ENCODE measurements at regions of chr15 and their contacts with region 1.

Region 1: GRCh38 chr15:40793216-40793989 is 13.5 kb upstream of the ZFYVE19 start:
- DNase-seq: peak; percentile 72
- H3K4me3 ChIP-seq: no peak overlapping the region
- CTCF ChIP-seq: no peak

Region 2: DNA sequence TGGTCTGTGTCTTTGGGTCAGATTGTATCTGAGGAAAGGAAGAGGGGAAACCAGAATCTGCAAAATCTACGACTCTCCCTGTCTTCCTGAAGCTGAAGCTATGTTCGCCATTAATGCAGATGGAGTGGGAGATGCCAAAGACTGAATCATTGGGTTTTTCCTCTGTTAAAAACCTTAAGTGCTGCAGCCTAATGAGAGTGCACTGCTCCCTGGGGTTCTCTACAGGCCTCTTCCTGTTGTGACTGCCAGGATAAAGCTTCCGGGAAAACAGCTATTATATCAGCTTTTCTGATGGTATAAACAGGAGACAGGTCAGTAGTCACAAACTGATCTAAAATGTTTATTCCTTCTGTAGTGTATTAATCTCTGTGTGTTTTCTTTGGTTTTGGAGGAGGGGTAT is 62.4 kb before region 1 on chr15:
- CTCF ChIA-PET with region 1: no interaction called
- POLR2A ChIA-PET with region 1: no interaction called
- DNase-seq: no peak
- H3K4me3 ChIP-seq: no peak overlapping the region
- CTCF ChIP-seq: no peak

Region 3: GRCh38 chr15:40754883-40755811 is 38.3 kb before region 1 on chr15 and contains the start of gene RMDN3:
- CTCF ChIA-PET with region 1: no interaction called
- POLR2A ChIA-PET with region 1: no interaction called
- DNase-seq: no peak
- H3K4me3 ChIP-seq: peak within 1 kb of the TSS; percentile 92
- CTCF ChIP-seq: no peak

Region 4: DNA sequence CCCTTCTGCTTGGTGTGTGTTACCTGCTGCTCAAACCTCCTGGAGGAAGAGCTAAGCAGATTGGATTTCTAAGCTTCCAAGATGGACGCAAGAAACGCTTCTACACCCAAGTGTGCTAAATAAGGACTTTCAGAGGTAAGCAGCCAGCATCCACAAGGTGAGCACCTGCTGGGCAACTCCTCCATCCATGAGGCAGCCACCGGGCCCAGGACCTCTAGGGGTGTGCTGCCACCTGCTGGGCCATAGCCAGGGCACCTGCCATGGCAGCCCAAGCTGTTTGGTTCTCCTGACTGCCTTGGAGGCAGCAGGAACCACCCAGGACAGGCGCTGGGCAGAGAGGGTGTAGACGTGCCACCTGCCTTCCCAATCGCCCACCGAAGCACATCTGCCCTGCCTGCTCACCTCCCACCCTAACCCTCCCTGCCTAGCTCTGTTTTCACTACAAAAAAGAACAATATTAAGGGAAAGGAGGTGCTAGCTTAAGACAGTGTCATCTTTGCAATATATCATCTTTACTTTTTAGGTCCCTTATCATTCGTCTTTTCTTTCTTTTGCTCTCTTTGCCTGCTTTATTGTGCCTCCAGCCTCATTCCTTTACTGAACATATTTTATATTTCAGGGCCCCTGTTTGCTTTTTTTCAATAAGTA is 10.7 kb before region 1 on chr15:
- CTCF ChIA-PET with region 1: interaction called, 11 read pairs
- POLR2A ChIA-PET with region 1: no interaction called
- DNase-seq: no peak
- H3K4me3 ChIP-seq: no peak overlapping the region
- CTCF ChIP-seq: peak; percentile 55